Naive thymus-derived CD4-positive, alpha-beta T cell (primary cell): ENCODE measurements at regions of chr10 and their contacts with region 1.

Region 1: GRCh38 chr10:65110029-65110428 is 1588.8 kb downstream of the REEP3 start:
- DNase-seq: no peak
- ATAC-seq: no peak
- H3K4me3 ChIP-seq: no peak overlapping the region
- H3K4me3 Mint-ChIP-seq: no peak overlapping the region
- H3K27ac ChIP-seq: no peak overlapping the region
- H3K27ac Mint-ChIP-seq: no peak overlapping the region
- H3K4me1 ChIP-seq: no peaks in the 10 kb centered on the region
- H3K4me1 Mint-ChIP-seq: no peaks in the 10 kb centered on the region
- H3K27me3 ChIP-seq: no peaks in the 10 kb centered on the region
- H3K27me3 Mint-ChIP-seq: no peaks in the 10 kb centered on the region

Region 2: DNA sequence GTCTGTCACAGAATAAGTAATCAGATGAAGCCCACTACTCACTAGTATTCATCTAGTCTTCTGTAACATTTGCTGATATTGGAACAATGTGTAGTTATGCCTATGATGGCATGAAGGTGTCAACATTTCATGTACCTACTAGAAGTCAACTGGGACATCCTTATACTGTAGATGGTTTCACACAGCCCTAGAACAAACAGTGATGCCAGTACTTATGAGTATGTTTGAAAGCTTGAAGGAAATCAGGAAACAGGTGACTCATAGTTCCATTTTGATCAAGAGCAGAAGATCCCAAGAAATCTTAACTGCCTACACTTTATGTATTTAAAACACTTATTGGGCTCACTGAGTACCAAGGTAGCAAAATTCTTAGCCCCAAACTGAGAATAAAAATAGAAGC is 69.2 kb before region 1 on chr10:
- CTCF ChIA-PET with region 1: no interaction called
- POLR2A ChIA-PET with region 1: no interaction called
- intact Hi-C with region 1: loop called in 1 of 2 experiments (anchors 2 kb)
- DNase-seq: no peak
- ATAC-seq: no peak
- H3K4me3 ChIP-seq: no peak overlapping the region
- H3K4me3 Mint-ChIP-seq: no peak overlapping the region
- H3K27ac ChIP-seq: no peak overlapping the region
- H3K27ac Mint-ChIP-seq: no peak overlapping the region
- H3K4me1 ChIP-seq: no peaks in the 10 kb centered on the region
- H3K4me1 Mint-ChIP-seq: no peaks in the 10 kb centered on the region
- H3K27me3 ChIP-seq: no peaks in the 10 kb centered on the region
- H3K27me3 Mint-ChIP-seq: no peaks in the 10 kb centered on the region

Region 3: GRCh38 chr10:65265502-65265901 is 155.5 kb after region 1 on chr10:
- CTCF ChIA-PET with region 1: no interaction called
- POLR2A ChIA-PET with region 1: no interaction called
- intact Hi-C with region 1: no loop called
- DNase-seq: no peak
- ATAC-seq: no peak
- H3K4me3 ChIP-seq: no peak overlapping the region
- H3K4me3 Mint-ChIP-seq: no peak overlapping the region
- H3K27ac ChIP-seq: no peak overlapping the region
- H3K27ac Mint-ChIP-seq: no peak overlapping the region
- H3K4me1 ChIP-seq: no peaks in the 10 kb centered on the region
- H3K4me1 Mint-ChIP-seq: no peaks in the 10 kb centered on the region
- H3K27me3 ChIP-seq: no peaks in the 10 kb centered on the region
- H3K27me3 Mint-ChIP-seq: no peaks in the 10 kb centered on the region